RWPE1 (cell line): ENCODE measurements at regions of chr7 and their contacts with region 1.

Region 1: DNA sequence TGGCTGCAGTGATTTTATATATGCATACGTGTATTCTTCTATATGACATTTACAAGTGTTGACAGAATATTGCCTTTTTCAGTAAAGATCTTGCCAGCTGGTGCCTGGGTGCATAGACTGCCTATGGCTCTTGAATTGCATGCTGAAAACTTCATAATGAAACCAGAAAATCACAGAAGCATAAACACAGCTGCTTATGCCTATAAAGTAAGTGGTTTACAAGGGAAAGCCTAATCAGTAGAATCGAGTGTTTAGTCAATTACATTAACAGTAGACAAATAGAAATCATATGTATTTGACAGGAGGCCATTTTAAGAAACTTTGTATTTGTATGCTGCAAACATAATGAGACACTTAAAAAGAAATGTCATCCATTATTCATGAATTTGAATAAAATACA is 82.5 kb downstream of the TMEM168 start:
- DNase-seq: no peak
- H3K27ac ChIP-seq: no peak overlapping the region
- CTCF ChIP-seq: no peak

Region 2: DNA sequence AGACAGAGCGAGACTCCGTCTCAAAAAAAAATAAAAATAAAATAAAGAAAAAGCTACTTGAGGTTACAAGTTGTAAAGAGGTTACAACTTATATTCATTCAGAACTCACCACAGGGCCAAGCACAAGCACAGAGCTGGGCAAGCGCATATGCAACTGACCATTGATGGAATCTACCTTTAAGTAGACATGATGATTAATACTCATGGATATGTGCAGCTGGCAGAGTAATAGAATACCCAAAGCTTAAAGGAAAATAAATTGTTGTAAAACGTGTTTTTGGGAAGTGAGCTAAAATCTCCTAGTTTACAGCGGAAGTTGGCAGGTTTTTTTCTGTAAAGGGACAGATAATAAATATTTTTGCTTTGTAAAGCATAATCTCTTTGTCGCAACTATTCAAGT is 29.0 kb before region 1 on chr7:
- CTCF ChIA-PET with region 1: interaction called, 10 read pairs
- POLR2A ChIA-PET with region 1: no interaction called
- DNase-seq: no peak
- H3K27ac ChIP-seq: no peak overlapping the region
- CTCF ChIP-seq: no peak